CD8-positive, alpha-beta T cell (primary cell): ENCODE measurements at regions of chr4 and their contacts with region 1.

Region 1: DNA sequence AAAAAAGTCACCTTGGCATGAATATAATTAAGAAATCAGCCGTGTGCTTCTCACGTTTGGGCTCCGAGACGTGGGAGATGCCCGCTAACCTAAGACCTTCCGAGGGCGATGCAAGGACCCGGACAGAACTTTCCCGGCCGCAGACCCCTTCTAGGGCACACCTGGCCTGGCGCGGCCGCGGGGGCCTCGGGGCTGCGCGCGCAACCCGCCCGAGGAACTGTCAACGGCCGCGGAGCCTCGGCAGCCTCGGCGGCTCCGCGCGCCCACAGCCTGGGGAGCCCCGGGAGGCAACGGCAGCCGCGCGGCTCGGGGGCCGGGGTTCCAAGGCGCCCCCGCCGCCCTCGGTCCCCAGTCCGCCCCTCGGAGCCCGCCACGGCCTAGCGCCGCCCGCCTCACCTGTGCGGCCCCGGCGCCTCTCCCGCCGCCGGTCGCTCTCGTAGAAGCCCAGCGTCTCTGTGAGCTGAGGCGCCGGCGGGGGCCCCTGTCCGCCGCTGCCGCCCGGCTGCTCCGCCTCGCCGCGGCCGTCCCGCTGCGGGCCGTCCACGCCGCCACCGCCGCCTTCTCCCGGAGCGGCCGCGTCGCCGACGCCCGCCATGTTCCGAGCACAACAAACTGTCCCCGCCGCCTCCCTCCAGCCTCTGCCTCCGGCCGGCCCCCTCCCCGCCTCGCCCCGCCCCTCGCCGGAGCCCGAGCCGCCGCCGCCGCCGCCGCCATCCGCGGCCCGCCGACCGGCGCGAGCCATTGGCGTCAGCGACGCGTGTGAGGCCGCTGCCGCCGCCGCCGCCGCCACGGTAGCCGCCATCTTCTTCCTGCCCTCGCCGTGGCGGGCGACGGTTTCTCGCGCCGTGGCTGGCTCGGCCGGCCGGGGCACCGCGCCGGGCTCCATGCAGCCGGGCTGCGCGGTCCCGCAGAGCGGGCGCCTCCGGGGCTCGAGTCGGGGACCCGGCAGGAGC is at the start of gene TAPT1:
- DNase-seq: peak; percentile 38 to 87 (median 75)
- ATAC-seq: peak; percentile 69
- H3K4me3 ChIP-seq: peak within 1 kb of the TSS; percentile 67 to 71
- H3K4me3 Mint-ChIP-seq: peak within 1 kb of the TSS; percentile 94
- H3K27ac ChIP-seq: peak within 1 kb of the TSS; percentile 65 to 75
- H3K27ac Mint-ChIP-seq: peak within 1 kb of the TSS; percentile 97
- H3K4me1 ChIP-seq: peaks cover 39% of the 10 kb centered on the region
- H3K4me1 Mint-ChIP-seq: peaks cover 60% of the 10 kb centered on the region
- H3K27me3 ChIP-seq: no peaks in the 10 kb centered on the region
- H3K27me3 Mint-ChIP-seq: no peaks in the 10 kb centered on the region
- CTCF ChIP-seq: no peak
- total RNA-seq, gene TAPT1: 79.8 to 95.0 TPM

Region 2: DNA sequence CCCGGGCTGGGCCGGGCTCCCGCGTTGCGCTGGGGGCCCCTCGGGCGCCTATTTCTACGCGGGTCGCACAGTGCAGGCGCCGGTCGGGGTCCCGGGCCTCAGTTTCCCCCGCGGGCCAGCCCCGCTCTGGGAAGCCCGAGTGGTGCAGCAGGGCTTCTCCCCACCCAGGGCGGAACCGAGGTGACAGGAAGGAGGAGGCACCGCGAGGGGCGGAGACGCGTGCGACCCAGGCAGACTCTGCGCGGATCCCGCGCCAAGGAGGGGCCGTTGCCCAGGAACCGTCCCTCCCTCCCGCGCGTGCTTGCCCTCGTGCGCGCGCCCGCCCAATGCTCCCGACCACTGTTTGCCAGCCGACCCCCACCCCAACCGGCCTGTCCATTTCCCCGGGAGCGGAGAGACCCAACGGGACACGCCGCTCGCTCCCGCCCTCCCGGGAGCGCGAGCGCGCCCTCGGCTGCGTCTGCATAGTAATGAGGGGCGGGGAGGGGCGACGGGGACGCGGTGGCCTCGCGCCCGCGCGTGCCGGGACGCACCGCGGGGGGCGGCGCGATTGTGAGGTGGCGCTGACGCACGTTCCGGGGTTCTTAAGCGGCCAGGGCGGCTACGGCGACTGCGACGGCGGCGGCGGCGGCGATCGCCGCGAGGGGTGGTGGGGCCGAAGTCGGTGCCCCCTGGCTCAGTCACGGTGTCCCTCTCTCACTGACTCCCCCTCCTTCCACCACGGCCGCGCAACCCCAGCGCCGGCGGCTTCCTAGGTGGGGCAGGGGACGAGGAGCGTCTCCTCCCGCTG is 1224.1 kb before region 1 on chr4 and contains the start of gene CPEB2:
- CTCF ChIA-PET with region 1: no interaction called
- POLR2A ChIA-PET with region 1: no interaction called
- intact Hi-C with region 1: loop called (anchors 2 to 5 kb)
- DNase-seq: peak; percentile 84 to 97 (median 91)
- ATAC-seq: peak; percentile 70
- H3K4me3 ChIP-seq: peak within 1 kb of the TSS; percentile 77 to 97
- H3K4me3 Mint-ChIP-seq: peak within 1 kb of the TSS; percentile 93
- H3K27ac ChIP-seq: peak within 1 kb of the TSS; percentile 100
- H3K27ac Mint-ChIP-seq: peak within 1 kb of the TSS; percentile 98
- H3K4me1 ChIP-seq: peaks cover 11% of the 10 kb centered on the region
- H3K4me1 Mint-ChIP-seq: peaks cover 26% of the 10 kb centered on the region
- H3K27me3 ChIP-seq: no peaks in the 10 kb centered on the region
- H3K27me3 Mint-ChIP-seq: no peaks in the 10 kb centered on the region
- CTCF ChIP-seq: no peak
- total RNA-seq, gene CPEB2: 17.7 to 21.8 TPM

Region 3: DNA sequence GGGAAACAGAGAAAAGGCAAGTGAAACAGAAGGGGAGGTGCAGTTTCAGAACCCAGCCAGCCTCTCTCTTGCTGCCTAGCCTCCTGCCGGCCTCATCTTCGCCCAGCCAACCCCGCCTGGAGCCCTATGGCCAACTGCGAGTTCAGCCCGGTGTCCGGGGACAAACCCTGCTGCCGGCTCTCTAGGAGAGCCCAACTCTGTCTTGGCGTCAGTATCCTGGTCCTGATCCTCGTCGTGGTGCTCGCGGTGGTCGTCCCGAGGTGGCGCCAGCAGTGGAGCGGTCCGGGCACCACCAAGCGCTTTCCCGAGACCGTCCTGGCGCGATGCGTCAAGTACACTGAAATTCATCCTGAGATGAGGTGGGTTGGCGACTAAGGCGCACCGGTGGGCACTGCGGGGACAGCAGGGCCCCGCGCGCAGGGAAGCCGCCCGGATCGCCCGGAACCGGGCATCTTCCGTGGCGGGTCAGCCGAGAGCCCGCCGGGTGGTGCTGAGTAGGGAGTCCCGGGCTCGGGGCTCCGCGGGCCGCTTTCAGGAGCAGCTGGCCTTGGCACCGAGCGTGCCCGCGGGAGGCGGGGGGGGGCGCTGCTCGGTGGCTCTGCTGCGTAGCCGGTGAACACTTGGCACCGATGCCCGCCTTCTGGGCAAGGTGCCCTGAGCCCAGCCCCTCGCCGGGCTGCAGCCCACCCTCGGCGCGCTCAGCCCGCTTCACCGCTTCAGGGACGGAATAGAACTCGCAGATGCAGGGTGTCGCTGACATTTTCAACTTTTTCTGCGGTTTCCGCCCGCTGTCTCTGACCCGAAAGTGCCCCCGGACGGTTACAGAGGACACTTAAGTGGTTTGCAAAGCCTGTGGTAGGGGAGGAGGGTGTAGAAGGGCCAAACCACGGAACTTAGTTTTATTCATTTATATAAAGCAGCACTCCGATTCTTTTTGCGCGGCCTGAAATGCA is 447.6 kb before region 1 on chr4 and contains the start of gene CD38:
- CTCF ChIA-PET with region 1: no interaction called
- POLR2A ChIA-PET with region 1: no interaction called
- intact Hi-C with region 1: loop called in 1 of 2 experiments (anchors 10 kb)
- DNase-seq: peak; percentile 16 to 65 (median 52)
- ATAC-seq: peak; percentile 49
- H3K4me3 ChIP-seq: peak within 1 kb of the TSS; percentile 57 to 74
- H3K4me3 Mint-ChIP-seq: peak within 1 kb of the TSS; percentile 85
- H3K27ac ChIP-seq: peak within 1 kb of the TSS in 1 of 2 experiments; percentile 32
- H3K27ac Mint-ChIP-seq: peak within 1 kb of the TSS; percentile 68
- H3K4me1 ChIP-seq: peaks cover 29% of the 10 kb centered on the region
- H3K4me1 Mint-ChIP-seq: peaks cover 56% of the 10 kb centered on the region
- H3K27me3 ChIP-seq: no peaks in the 10 kb centered on the region
- H3K27me3 Mint-ChIP-seq: no peaks in the 10 kb centered on the region
- CTCF ChIP-seq: no peak
- total RNA-seq, gene CD38: 3.5 to 6.2 TPM

Region 4: DNA sequence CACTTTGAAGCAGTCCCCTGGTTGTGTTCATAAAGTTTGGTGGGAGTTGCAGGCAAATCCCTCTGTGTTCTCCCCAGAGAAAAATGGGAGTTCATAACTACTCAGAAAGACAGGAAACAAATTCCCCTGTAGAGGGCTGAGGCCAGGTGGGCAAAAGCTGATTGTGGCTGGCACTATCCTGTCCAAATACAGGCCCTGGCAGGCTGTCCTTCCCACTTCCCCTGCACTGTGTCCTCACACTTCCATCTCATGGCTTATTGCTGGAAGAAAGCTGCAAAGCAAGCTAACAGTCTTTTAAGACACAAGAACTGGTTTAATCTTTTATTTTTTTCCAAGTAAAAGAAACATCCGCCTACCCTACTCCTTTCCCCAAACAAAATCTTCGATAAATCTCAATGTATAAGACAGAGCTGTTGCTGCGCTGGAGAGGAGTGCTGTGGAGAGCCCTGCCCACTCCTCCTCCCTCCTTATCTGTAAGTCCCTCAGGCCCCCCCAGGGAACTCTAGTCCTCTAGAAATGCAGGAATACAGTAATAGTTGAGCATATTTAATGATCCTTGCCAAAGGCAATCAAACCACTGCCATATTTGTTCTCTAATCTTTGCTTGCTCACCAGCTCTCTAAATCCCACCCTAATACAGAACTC is 13.9 kb before region 1 on chr4:
- CTCF ChIA-PET with region 1: no interaction called
- POLR2A ChIA-PET with region 1: interaction called, 3 read pairs
- intact Hi-C with region 1: loop called in 1 of 2 experiments (anchors 2 kb)
- DNase-seq: no peak
- ATAC-seq: no peak
- H3K4me3 ChIP-seq: no peak overlapping the region
- H3K4me3 Mint-ChIP-seq: no peak overlapping the region
- H3K27ac ChIP-seq: no peak overlapping the region
- H3K27ac Mint-ChIP-seq: no peak overlapping the region
- H3K4me1 ChIP-seq: peaks cover 39% of the 10 kb centered on the region
- H3K4me1 Mint-ChIP-seq: peaks cover 66% of the 10 kb centered on the region
- H3K27me3 ChIP-seq: no peaks in the 10 kb centered on the region
- H3K27me3 Mint-ChIP-seq: no peaks in the 10 kb centered on the region
- CTCF ChIP-seq: no peak

Region 5: DNA sequence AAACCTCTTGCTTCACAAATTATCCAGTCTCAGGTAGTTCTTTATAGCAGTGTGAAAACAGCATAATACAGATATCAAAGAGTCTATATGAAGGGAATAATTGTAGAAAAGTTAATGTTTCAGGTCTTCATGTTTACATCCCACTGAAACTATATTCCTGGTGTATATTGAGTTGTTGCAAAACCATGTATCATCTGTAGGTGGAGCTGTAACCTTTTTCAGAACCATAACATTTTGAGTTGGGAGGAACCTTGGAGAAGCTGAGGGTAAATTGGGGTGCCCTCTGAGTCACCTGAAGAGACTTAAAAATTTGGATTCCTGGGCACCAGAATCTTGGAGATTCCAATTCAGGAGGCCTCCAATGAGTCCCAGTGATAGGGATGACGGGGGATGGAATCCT is 52.0 kb after region 1 on chr4:
- CTCF ChIA-PET with region 1: no interaction called
- POLR2A ChIA-PET with region 1: no interaction called
- intact Hi-C with region 1: no loop called
- DNase-seq: no peak
- ATAC-seq: no peak
- H3K4me3 ChIP-seq: no peak overlapping the region
- H3K4me3 Mint-ChIP-seq: no peak overlapping the region
- H3K27ac ChIP-seq: no peak overlapping the region
- H3K27ac Mint-ChIP-seq: no peak overlapping the region
- H3K4me1 ChIP-seq: no peaks in the 10 kb centered on the region
- H3K4me1 Mint-ChIP-seq: no peaks in the 10 kb centered on the region
- H3K27me3 ChIP-seq: peaks cover 0 to 2% of the 10 kb centered on the region in 2 experiments
- H3K27me3 Mint-ChIP-seq: peaks cover 27% of the 10 kb centered on the region
- CTCF ChIP-seq: no peak

Region 6: GRCh38 chr4:17324386-17324830 is 1098.3 kb after region 1 on chr4:
- CTCF ChIA-PET with region 1: no interaction called
- POLR2A ChIA-PET with region 1: no interaction called
- intact Hi-C with region 1: loop called in 1 of 2 experiments (anchors 10 kb)
- DNase-seq: peak in 8 of 9 experiments; percentile 30 to 66 (median 55)
- ATAC-seq: peak; percentile 66
- H3K4me3 ChIP-seq: no peak overlapping the region
- H3K4me3 Mint-ChIP-seq: peak overlapping the region; percentile 56
- H3K27ac ChIP-seq: no peak overlapping the region
- H3K27ac Mint-ChIP-seq: no peak overlapping the region
- H3K4me1 ChIP-seq: peaks cover 4% of the 10 kb centered on the region
- H3K4me1 Mint-ChIP-seq: peaks cover 11% of the 10 kb centered on the region
- H3K27me3 ChIP-seq: no peaks in the 10 kb centered on the region
- H3K27me3 Mint-ChIP-seq: no peaks in the 10 kb centered on the region
- CTCF ChIP-seq: peak; percentile 61

Region 7: DNA sequence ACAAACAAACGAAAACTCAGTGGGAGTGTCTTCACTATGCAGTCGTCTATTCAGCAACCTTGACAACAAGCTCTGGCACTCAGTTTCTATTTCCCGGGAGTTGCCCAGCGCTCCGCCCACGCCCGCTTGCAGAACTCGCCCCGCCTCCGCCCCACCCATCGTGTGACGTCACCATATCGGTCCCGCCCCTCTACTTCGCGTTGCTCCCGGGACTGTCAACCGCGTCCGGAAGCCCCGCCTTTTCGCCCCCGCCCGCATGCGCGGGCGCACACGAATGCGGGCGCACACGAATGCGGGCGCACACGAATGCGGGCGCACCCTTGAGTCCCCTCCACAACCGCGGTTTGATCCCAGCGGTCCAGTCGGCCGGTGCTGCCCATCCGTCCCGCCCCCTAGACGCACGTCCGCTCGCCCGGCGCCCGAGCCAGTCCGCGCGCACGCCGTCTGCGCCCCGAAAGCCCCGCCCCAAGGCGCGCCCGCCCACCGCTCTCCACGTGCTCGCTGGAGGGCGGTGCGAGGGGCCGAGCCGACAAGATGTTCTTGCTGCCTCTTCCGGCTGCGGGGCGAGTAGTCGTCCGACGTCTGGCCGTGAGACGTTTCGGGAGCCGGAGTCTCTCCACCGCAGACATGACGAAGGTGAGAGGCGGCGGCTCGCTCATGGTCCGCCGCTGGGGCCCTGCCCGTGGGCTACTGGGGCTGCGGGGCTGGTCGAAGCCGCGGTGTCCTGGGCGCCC is 1351.0 kb after region 1 on chr4 and contains the start of gene LAP3:
- CTCF ChIA-PET with region 1: no interaction called
- POLR2A ChIA-PET with region 1: no interaction called
- intact Hi-C with region 1: loop called in 1 of 2 experiments (anchors 10 kb)
- DNase-seq: peak; percentile 96 to 100 (median 99)
- ATAC-seq: peak; percentile 87
- H3K4me3 ChIP-seq: peak within 1 kb of the TSS; percentile 91 to 94
- H3K4me3 Mint-ChIP-seq: peak within 1 kb of the TSS; percentile 93
- H3K27ac ChIP-seq: peak within 1 kb of the TSS; percentile 95 to 96
- H3K27ac Mint-ChIP-seq: peak within 1 kb of the TSS; percentile 97
- H3K4me1 ChIP-seq: peaks cover 20% of the 10 kb centered on the region
- H3K4me1 Mint-ChIP-seq: peaks cover 24% of the 10 kb centered on the region
- H3K27me3 ChIP-seq: no peaks in the 10 kb centered on the region
- H3K27me3 Mint-ChIP-seq: no peaks in the 10 kb centered on the region
- CTCF ChIP-seq: no peak
- total RNA-seq, gene LAP3: 60.1 to 60.2 TPM

Region 8: GRCh38 chr4:17810260-17811077 is 1584.3 kb after region 1 on chr4 and contains the starts of genes DCAF16 and NCAPG:
- CTCF ChIA-PET with region 1: no interaction called
- POLR2A ChIA-PET with region 1: no interaction called
- intact Hi-C with region 1: loop called (anchors 2 to 5 kb)
- DNase-seq: peak; percentile 96 to 99 (median 99)
- ATAC-seq: peak; percentile 88
- H3K4me3 ChIP-seq: peak within 1 kb of the TSS; percentile 75 to 98
- H3K4me3 Mint-ChIP-seq: peak within 1 kb of the TSS; percentile 98
- H3K27ac ChIP-seq: peak within 1 kb of the TSS; percentile 88 to 97
- H3K27ac Mint-ChIP-seq: peak within 1 kb of the TSS; percentile 99
- H3K4me1 ChIP-seq: peaks cover 41% of the 10 kb centered on the region
- H3K4me1 Mint-ChIP-seq: peaks cover 54% of the 10 kb centered on the region
- H3K27me3 ChIP-seq: no peaks in the 10 kb centered on the region
- H3K27me3 Mint-ChIP-seq: no peaks in the 10 kb centered on the region
- CTCF ChIP-seq: no peak
- total RNA-seq, gene DCAF16: 82.2 to 83.4 TPM
- total RNA-seq, gene NCAPG: 0.52 to 1.3 TPM